ENCODE measurements at regions of chr1 and their contacts with region 1.

Region 1: GRCh38 chr1:66996018-66996682 is 57.8 kb downstream of the SLC35D1 start:
- DNase-seq: peak; percentile 55
- H3K4me3 ChIP-seq: no peak overlapping the region
- H3K27ac ChIP-seq: no peak overlapping the region
- H3K27me3 ChIP-seq: no peaks in the 10 kb centered on the region
- CTCF ChIP-seq: peak; percentile 89

Region 2: DNA sequence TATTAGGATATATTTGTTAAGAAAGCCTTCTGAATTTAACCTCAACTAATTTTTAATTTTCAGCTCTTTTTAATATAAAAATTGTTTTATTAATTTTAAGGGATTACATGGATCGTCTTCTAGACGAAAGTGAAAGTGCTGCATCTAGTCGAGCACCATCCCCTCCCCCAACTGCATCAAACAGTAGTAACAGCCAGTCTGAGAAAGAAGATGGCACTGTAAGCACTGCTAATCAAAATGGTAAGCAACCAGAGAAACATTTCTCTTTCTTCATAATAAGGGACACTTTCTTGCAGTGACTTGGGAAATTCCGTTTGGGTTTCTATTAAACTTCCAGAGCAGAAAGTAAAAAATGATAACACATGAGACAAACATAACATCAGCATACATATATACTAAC is 14.5 kb before region 1 on chr1:
- CTCF ChIA-PET with region 1: interaction called, 22 read pairs
- POLR2A ChIA-PET with region 1: interaction called, 9 read pairs
- DNase-seq: no peak
- H3K4me3 ChIP-seq: no peak overlapping the region
- H3K27ac ChIP-seq: no peak overlapping the region
- H3K27me3 ChIP-seq: no peaks in the 10 kb centered on the region
- CTCF ChIP-seq: no peak

Region 3: GRCh38 chr1:67031121-67031858 is 35.1 kb after region 1 on chr1:
- CTCF ChIA-PET with region 1: interaction called, 10 read pairs
- POLR2A ChIA-PET with region 1: no interaction called
- DNase-seq: no peak
- H3K4me3 ChIP-seq: no peak overlapping the region
- H3K27ac ChIP-seq: no peak overlapping the region
- H3K27me3 ChIP-seq: no peaks in the 10 kb centered on the region
- CTCF ChIP-seq: no peak

Region 4: DNA sequence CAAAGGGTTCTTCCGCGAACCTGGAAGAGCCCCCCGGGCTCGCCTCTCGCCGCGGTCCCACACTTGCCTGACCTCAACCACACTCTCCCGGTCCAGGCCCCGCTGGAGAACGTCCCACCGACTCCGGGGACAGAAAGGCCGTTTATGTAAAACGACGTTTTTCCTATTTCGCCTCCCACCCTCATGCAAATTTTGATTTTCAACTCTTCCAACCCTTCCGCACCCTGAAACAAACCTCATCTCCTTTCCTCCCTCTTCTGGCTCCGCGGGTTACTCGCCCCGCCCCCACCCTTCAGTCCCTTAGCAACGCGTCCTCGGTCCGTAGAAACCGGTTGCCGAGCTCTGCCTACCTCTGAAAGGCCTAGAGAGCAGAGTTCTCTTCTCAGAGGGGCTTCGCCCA is 138.5 kb after region 1 on chr1 and contains the start of gene C1orf141:
- CTCF ChIA-PET with region 1: interaction called, 14 read pairs
- POLR2A ChIA-PET with region 1: no interaction called
- DNase-seq: no peak
- H3K4me3 ChIP-seq: no peak within 1 kb of the TSS; the same call in 1 of the 2 replicates
- H3K27ac ChIP-seq: no peak within 1 kb of the TSS
- H3K27me3 ChIP-seq: no peaks in the 10 kb centered on the region
- CTCF ChIP-seq: no peak
- polyA plus RNA-seq, gene C1orf141: not detected in 2 replicates

Region 5: DNA sequence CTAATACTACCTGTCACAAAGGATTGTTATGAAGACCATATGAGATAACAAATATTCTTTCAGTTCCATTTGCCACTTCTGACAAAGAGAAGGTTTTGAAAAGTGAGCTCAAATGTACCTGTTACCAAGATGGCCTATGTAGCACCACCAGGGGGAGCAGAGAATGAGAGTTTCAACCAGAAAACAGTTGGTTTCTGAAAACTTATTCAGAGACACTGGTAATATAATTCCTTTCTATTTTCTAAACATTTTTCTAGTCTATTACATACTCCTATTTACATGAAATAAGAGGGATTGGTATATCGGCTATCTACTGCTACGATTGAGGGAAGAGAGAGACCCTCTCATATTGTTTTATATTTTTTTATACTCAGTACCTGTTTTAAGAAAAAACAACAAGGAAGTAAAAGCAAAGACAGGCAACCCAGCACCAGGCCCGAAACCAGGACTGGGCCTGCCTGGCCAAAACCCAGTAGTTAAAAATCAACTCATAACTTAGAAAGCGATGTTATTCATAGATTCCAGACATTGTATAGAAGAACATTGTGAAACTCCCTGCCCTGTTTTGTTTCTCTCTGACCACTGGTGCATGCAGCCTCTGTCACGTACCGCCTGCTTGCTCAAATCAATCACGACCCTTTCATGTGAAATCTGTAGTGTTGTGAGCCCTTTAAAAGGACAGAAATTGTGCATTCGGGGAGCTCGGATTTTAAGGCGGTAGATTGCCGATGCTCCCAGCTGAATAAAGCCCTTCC is 218.4 kb after region 1 on chr1:
- CTCF ChIA-PET with region 1: interaction called, 81 read pairs
- POLR2A ChIA-PET with region 1: interaction called, 4 read pairs
- DNase-seq: no peak
- H3K4me3 ChIP-seq: no peak overlapping the region
- H3K27ac ChIP-seq: no peak overlapping the region
- H3K27me3 ChIP-seq: peaks cover 6% of the 10 kb centered on the region
- CTCF ChIP-seq: peak; percentile 73